Psoas muscle (tissue), 8 donors: ENCODE measurements at regions of chr6 and their contacts with region 1.

Region 1: GRCh38 chr6:52087498-52087999 is at the start of gene PKHD1:
- DNase-seq: no peak
- ATAC-seq: peak in 3 of 4 donors; percentile 43 to 93 (median 72)
- H3K4me3 ChIP-seq: no peak within 1 kb of the TSS
- H3K27ac ChIP-seq: no peak within 1 kb of the TSS
- H3K4me1 ChIP-seq: no peaks in the 10 kb centered on the region
- H3K27me3 ChIP-seq: no peaks in the 10 kb centered on the region
- CTCF ChIP-seq: peak; percentile 50
- total RNA-seq, gene PKHD1: 0.02 to 0.11 (median 0.04) TPM in 3 of 4 donors, not detected in the other

Region 2: DNA sequence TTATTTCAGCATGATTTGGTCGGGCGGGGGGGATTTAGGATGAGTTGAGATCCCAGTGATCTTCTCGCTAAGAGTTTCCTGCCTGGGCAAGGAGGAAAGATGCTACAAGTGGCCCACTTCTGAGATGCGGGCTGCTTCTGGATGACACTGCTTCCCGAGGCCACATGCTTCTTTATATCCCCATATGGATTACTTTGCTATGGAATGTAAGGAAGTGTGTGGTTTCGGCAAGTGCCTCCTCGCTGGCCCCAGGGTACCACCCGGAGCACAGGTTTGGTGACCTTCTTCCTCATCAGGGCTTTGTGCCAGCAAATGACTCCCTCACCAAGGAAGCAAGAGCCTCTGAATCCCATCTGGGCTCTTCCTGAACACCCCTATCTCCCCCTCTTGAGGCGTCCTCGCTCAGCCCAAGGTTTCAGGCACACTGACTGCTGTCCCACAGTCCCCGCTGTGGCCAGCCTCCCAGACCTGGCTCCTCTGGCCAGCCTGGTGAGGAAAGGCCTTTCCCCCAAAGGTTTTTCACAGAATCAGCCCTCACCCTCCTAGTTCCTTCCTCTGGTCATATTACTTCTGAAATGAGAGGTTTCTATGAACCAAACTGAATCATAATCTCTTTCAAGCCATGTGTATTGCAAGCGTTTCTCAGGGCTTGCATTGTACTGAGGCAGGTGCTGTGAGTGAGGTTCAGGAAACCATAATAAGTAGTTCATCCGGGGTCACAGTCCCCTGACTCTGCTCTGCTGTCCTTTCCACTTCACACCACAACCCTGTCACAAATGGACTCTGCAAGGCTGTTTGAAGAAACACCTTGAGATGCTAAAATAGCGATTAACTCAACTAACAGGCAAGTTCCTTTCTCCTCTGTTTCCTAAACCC is 56.9 kb after region 1 on chr6:
- intact Hi-C with region 1: loop called in 1 of 2 experiments (anchors 5 kb)
- DNase-seq: no peak
- ATAC-seq: no peak
- H3K4me3 ChIP-seq: no peak overlapping the region
- H3K27ac ChIP-seq: peak overlapping the region; percentile 53
- H3K4me1 ChIP-seq: no peaks in the 10 kb centered on the region
- H3K27me3 ChIP-seq: no peaks in the 10 kb centered on the region
- CTCF ChIP-seq: no peak